Heart right ventricle (tissue), 16 donors: ENCODE measurements at regions of chr11 and their contacts with region 1.

Region 1: GRCh38 chr11:120839846-120840402 is 184.0 kb upstream of the TBCEL start:
- DNase-seq: no peak
- ATAC-seq: no peak
- H3K4me3 ChIP-seq: no peak overlapping the region
- H3K27ac ChIP-seq: no peak overlapping the region
- H3K4me1 ChIP-seq: no peaks in the 10 kb centered on the region
- H3K27me3 ChIP-seq: peaks cover 0 to 30% (median 0%) of the 10 kb centered on the region in 7 donors
- CTCF ChIP-seq: no peak

Region 2: DNA sequence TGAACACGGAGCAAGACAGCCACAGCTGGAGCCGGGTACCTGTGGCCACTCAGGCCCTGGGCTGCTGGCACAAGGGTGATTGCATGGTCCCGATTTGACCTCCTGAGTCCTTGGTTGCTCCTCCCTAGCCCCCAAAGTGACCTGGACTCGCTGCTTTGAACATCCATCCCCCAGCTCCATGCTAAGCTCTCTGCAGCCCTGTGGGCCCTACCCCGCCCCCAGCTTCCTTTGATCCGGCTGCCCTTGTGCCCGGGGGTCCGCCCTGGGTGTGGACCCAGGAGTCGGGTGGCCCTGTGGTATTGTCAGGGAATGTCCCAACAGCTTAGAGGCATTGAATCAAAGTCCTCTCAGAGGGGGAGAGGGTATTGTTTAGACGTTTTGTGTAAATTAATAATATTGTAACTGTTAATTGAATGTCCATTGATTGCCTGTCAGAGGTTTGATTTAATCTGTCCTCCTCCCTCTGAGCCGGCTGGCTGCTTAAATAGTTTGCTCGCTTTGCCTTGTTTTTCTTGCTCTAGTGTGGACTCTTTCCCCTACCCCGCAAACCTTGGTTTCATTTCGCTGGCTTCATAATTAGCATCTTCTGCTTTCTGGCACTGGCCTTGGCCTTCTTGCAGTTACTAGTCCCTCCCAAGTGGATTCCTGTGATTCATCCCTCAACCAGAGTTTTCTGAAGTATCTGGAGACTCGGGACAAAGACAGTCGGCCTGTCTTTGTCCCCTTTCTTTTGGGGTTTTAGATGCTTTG is 307.7 kb before region 1 on chr11:
- intact Hi-C with region 1: no loop called
- DNase-seq: no peak
- ATAC-seq: no peak
- H3K4me3 ChIP-seq: no peak overlapping the region
- H3K27ac ChIP-seq: no peak overlapping the region
- H3K4me1 ChIP-seq: peaks cover 0 to 6% (median 0%) of the 10 kb centered on the region in 9 donors
- H3K27me3 ChIP-seq: peaks cover 0 to 26% (median 7%) of the 10 kb centered on the region in 7 donors
- CTCF ChIP-seq: no peak

Region 3: DNA sequence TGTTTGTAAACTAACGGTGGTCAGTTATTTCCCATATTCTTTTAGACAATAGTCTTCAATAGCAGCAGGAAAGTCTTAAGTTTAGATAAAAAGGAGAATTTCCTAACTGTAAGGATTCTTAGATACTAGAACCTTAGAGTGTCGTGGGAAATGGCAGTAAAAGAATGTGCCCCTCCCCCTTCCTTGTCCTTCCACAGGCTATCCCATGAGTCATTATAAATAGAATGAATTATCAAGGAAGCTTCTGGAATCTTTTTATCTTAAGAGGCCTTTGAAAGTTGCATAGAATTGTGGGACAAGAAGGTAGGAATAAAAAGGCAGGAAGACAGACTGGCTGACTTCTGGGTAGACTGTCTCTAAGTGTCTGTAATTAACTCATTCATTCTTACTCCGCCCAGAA is 18.8 kb after region 1 on chr11:
- intact Hi-C with region 1: no loop called
- DNase-seq: no peak
- ATAC-seq: no peak
- H3K4me3 ChIP-seq: no peak overlapping the region
- H3K27ac ChIP-seq: no peak overlapping the region
- H3K4me1 ChIP-seq: peaks cover 0 to 15% (median 8%) of the 10 kb centered on the region in 9 donors
- H3K27me3 ChIP-seq: peaks cover 0 to 19% (median 0%) of the 10 kb centered on the region in 7 donors
- CTCF ChIP-seq: no peak

Region 4: DNA sequence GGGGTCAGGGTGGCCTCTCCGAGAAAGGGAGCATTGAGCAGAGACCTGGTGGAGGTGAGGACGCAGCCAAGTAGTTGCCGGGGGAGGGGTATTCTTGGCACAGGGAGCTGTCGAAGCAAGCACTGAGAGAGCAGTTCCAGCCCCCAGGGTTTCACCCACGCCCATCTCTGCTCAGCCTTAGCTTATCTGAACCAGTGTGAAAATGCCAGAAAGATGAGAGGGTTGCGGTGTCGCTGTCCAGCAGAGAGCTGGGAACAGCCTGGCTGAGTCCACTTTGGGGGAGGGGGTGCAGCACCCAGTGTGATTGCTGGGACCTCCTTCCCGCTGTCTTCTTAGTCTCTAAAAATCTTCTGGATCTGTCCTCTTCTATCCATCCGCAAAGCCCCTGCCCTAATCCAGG is 60.7 kb after region 1 on chr11:
- intact Hi-C with region 1: no loop called
- DNase-seq: no peak
- ATAC-seq: peak in 1 of 8 donors; percentile 27
- H3K4me3 ChIP-seq: no peak overlapping the region
- H3K27ac ChIP-seq: no peak overlapping the region
- H3K4me1 ChIP-seq: no peaks in the 10 kb centered on the region
- H3K27me3 ChIP-seq: peaks cover 0 to 76% (median 29%) of the 10 kb centered on the region in 7 donors
- CTCF ChIP-seq: no peak

Region 5: DNA sequence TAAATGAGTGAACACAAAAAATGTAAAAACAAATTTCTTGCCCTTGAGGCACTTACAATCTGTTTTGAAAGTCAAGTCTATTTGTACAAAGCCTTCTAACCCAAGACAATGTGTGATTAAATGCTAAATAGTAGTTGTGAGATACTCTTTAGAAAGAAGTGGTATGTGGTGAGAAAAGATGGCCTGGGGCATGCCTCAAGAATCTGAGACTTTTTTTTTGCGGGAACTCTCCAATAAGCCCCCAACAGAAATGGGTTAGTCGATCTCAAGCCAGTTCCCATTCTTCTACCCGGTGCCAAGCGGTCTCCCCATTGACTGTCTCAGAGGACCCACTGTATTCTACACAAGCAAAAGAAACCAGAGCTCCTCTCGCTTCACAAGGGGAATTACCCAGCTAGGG is 157.0 kb after region 1 on chr11:
- intact Hi-C with region 1: loop called in 1 of 10 experiments (anchors 5 kb)
- DNase-seq: no peak
- ATAC-seq: no peak
- H3K4me3 ChIP-seq: no peak overlapping the region
- H3K27ac ChIP-seq: no peak overlapping the region
- H3K4me1 ChIP-seq: no peaks in the 10 kb centered on the region
- H3K27me3 ChIP-seq: peaks cover 0 to 33% (median 11%) of the 10 kb centered on the region in 7 donors
- CTCF ChIP-seq: no peak